Tibial artery (tissue), 4 donors: ENCODE measurements at regions of chr4 and their contacts with region 1.

Region 1: DNA sequence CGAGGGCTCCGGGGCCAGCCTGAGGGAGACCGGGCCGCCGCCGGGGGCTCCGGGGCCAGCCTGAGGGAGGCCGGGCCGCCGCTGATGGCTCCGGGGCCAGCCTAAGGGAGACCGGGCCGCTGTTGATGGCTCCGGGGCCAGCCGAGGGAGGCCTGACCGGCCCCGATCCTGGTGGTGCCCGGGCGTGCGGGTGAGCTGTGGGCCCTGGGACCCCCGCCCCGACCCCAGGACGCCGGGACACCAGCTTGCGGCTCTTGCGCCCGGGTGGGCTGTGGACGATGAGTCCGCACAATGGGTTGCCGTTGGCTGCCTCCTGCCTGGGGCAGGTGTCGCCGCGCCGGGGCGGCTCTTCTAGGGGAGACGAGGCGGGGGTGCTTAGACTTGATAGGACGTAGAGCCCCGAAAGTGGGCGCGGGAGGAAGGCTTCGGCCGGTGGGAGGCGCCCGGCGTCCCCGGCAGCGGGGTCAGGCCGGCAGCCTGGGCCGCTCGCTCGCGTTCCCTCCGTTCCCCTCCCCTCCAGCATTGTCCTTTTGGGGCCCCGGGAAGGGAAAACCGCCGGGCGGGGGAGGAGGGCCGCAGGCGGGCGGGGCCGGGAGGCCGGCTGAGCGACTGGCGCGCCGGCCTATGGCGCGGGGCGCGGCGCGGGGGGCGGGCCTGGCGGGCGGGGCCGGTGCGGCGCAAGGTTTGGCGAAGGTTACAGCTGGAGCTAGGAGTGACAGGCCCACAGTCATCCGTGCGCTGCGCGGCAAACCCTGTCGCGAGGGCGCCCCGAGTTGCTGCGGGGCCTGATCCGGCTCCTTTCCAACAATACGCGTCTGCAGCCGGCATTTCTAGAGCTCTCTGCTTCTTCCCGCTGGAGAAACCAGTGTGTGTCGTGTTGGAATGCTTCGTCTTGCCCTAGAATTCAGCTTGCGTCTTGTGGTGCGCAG is 790 bp downstream of the KIAA0232 start:
- DNase-seq: peak; percentile 84 to 96
- H3K4me3 ChIP-seq: peak overlapping the region; percentile 91 to 98
- H3K27ac ChIP-seq: peak overlapping the region; percentile 100
- H3K4me1 ChIP-seq: peaks cover 4 to 75% (median 48%) of the 10 kb centered on the region in 4 donors
- H3K27me3 ChIP-seq: no peaks in the 10 kb centered on the region
- CTCF ChIP-seq: no peak

Region 2: GRCh38 chr4:6574747-6575502 is 208.4 kb before region 1 on chr4 and contains the start of gene MAN2B2:
- intact Hi-C with region 1: loop called (anchors 10 kb)
- DNase-seq: peak; percentile 86 to 94
- H3K4me3 ChIP-seq: peak within 1 kb of the TSS; percentile 80 to 81
- H3K27ac ChIP-seq: peak within 1 kb of the TSS; percentile 79 to 81
- H3K4me1 ChIP-seq: peaks cover 0 to 29% (median 14%) of the 10 kb centered on the region in 4 donors
- H3K27me3 ChIP-seq: no peaks in the 10 kb centered on the region
- CTCF ChIP-seq: no peak

Region 3: GRCh38 chr4:6720202-6720699 is 63.1 kb before region 1 on chr4:
- intact Hi-C with region 1: loop called (anchors 5 kb)
- DNase-seq: peak; percentile 65 to 89
- H3K4me3 ChIP-seq: no peak overlapping the region
- H3K27ac ChIP-seq: peak overlapping the region in 1 of 2 donors; percentile 16
- H3K4me1 ChIP-seq: peaks cover 0 to 34% (median 24%) of the 10 kb centered on the region in 4 donors
- H3K27me3 ChIP-seq: no peaks in the 10 kb centered on the region
- CTCF ChIP-seq: peak; percentile 91 to 98

Region 4: DNA sequence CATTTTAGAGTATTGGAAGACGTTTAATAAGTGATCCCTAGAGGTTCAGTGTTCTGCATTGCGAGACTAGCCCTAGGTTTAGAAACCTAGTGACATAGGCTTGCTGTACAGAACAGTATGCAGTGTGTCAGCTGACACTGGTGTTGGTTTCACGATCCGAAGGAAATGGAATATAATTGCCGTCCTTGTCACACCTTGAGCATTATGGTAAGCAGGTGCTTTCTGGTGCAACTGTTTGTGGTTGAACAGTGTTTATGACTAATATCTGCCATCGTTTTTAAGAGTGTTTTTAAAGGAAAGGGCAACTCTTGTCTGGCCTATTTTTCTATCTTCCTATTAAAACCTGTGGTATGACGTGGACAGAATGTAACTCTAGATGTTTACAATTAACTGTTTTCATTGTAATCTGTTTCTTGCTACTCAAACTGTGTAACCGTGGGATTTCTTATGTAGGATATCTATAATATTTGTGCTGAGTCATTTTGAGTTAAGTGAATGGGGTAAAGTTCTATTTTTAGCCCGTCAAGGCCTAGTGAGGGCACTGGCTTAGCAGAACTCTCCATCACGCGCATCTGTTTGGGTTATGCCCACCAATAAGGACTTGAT is 72.5 kb after region 1 on chr4:
- intact Hi-C with region 1: loop called (anchors 5 kb)
- DNase-seq: no peak
- H3K4me3 ChIP-seq: no peak overlapping the region
- H3K27ac ChIP-seq: peak overlapping the region; percentile 51 to 71
- H3K4me1 ChIP-seq: peaks cover 0 to 33% (median 19%) of the 10 kb centered on the region in 4 donors
- H3K27me3 ChIP-seq: no peaks in the 10 kb centered on the region
- CTCF ChIP-seq: no peak

Region 5: GRCh38 chr4:6873792-6874461 is 90.6 kb after region 1 on chr4:
- intact Hi-C with region 1: loop called (anchors 5 kb)
- DNase-seq: peak; percentile 74 to 80
- H3K4me3 ChIP-seq: no peak overlapping the region
- H3K27ac ChIP-seq: no peak overlapping the region
- H3K4me1 ChIP-seq: no peaks in the 10 kb centered on the region
- H3K27me3 ChIP-seq: no peaks in the 10 kb centered on the region
- CTCF ChIP-seq: peak; percentile 78 to 79

Region 6: DNA sequence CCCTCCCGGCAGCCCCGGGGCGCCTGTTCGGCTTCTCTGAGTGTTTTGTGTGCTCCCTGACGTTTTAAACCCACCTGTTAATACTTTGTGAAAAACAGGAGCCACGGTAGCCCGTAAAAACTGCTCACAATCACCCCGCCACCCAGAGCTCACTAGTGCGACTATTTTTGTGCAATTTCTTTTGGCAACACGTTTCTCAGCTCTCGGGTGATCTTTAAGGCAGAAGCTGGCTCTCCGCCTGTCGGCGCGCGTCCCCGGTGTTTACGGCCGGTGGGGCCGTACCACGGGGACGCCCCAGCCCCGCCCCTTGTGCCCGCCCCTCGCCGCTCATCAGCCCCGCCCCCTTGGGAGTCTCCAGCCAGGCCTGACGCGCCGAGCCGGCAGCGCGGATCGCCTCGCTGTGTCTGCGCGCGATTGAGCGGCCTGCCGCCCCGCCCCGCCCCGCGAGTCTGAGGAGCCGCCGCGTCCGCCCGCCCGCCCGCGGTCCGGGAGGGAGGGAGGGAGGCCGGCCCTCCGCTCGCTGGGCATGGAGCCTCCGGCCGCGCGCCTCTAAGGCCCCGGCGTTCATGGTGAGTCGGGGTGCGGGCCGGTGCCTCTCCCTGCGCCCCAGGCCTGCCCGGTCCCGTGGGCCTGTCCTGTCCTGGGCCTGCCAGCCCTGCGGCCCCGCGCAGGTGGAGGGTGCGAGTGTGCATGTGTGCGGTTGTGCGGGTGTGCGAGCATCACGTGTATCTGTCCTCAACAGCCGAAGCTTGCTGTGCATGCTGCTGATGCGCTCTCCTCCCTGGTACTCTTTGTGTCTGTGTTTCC is 203.7 kb after region 1 on chr4:
- intact Hi-C with region 1: loop called (anchors 5 kb)
- DNase-seq: peak; percentile 93 to 98
- H3K4me3 ChIP-seq: peak overlapping the region; percentile 69 to 84
- H3K27ac ChIP-seq: peak overlapping the region; percentile 96 to 98
- H3K4me1 ChIP-seq: peaks cover 0 to 54% (median 41%) of the 10 kb centered on the region in 4 donors
- H3K27me3 ChIP-seq: no peaks in the 10 kb centered on the region
- CTCF ChIP-seq: peak in 1 of 2 experiments; percentile 12

Region 7: DNA sequence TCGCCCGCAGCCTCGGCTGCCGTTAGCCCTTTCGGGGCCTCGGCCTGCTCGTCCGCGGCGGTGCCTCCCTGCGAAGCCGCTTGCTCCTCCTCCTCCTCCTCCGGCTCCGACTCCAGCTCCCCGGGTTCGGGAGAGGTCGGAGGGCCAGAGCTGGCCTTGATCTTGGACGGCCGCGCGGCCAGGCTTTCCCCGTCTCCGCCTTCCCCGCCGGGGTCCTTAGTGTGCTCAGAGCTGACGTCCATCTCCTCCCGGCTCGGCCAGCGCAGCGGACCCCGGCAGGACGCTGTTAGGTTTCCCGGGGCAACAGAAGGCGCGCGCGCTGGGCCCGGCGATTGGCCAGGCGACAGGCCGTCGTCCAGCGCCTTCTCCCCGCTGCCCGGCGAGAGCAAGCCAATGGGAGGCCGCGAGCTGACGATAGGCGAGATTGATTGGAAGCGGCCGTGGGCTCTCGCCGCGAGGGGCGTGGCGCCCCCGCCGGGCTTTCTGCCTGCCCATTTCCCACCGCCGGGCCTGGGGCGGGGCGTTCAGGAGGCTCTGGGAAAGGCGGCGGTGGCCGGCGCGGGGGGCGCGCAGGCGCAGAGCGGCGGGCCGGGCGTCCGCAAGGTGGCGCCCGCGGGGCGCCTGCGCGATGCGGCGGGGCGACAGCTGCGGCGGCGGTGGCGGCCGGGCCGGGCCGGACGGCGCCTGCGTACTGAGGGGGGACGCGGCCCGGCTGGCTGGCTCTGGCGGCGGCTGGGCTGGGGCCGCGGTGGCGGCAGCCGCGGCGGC is 259.6 kb after region 1 on chr4 and contains the start of gene TADA2B:
- intact Hi-C with region 1: loop called (anchors 10 kb)
- DNase-seq: peak; percentile 96 to 99
- H3K4me3 ChIP-seq: peak within 1 kb of the TSS; percentile 96 to 100
- H3K27ac ChIP-seq: peak within 1 kb of the TSS; percentile 90 to 99
- H3K4me1 ChIP-seq: peaks cover 0 to 50% (median 41%) of the 10 kb centered on the region in 4 donors
- H3K27me3 ChIP-seq: no peaks in the 10 kb centered on the region
- CTCF ChIP-seq: peak; percentile 19 to 79